Activated T-helper 1 cell treated with anti-CD3 and anti-CD28 coated beads, Interleukin-12 subunit alpha, Interleukin-12 subunit beta, Interleukin-2, Interleukin-4 antibody, amounts not matched to agents 30 ng/mL and 10 ng/mL and 1 ng/mL, durations not matched to agents 14 hours and 24 hours and 36 hours (primary cell): ENCODE measurements at regions of chr1 and their contacts with region 1.

Region 1: DNA sequence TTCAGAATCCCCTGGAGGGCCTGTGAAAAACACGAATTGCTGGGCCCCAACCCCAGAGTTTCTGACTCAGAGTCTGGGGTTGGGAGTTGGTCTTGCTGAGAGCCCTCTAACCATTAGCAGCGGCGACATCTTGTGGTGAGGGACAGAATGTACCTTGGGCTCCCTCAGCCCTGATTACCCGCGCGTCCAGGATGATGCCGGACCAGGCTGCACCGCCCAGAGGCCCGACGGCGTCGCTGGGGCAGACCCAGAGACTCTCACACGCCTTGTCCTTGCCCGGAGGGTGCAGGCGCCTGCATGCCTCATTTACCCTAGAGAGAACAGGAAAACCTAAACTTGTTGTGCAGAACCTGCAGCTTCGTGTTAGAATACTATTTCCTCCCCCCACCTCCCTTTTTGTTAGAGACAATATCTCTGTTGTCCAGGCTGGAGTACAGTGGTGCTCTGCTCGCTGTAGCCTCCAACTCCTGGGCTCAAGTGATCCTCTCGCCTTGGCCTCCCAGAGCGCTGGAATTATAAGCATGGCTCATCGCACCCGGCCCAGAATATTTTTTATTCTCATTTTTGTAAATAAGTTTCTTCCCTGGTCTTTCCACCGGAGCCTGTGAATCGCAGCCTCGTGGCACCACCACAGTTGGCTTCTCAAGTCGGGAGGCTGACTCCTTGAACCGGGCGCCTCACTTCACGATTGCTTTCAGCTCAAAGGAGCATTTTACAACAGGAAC is 22.2 kb upstream of the RD3 start:
- DNase-seq: peak; percentile 58
- H3K4me3 Mint-ChIP-seq: peak overlapping the region; percentile 66
- H3K27ac Mint-ChIP-seq: peak overlapping the region; percentile 55
- H3K4me1 Mint-ChIP-seq: peaks cover 27% of the 10 kb centered on the region
- H3K27me3 Mint-ChIP-seq: peaks cover 13% of the 10 kb centered on the region

Region 2: GRCh38 chr1:210584439-210585113 is 929.6 kb before region 1 on chr1:
- intact Hi-C with region 1: loop called (anchors 1 kb)
- DNase-seq: peak; percentile 37
- H3K4me3 Mint-ChIP-seq: no peak overlapping the region
- H3K27ac Mint-ChIP-seq: no peak overlapping the region
- H3K4me1 Mint-ChIP-seq: peaks cover 9% of the 10 kb centered on the region
- H3K27me3 Mint-ChIP-seq: no peaks in the 10 kb centered on the region

Region 3: GRCh38 chr1:211382714-211383480 is 131.3 kb before region 1 on chr1:
- intact Hi-C with region 1: loop called (anchors 1 kb)
- DNase-seq: peak; percentile 77
- H3K4me3 Mint-ChIP-seq: peak overlapping the region; percentile 91
- H3K27ac Mint-ChIP-seq: peak overlapping the region; percentile 89
- H3K4me1 Mint-ChIP-seq: peaks cover 51% of the 10 kb centered on the region
- H3K27me3 Mint-ChIP-seq: peaks cover 8% of the 10 kb centered on the region

Region 4: GRCh38 chr1:211476200-211476849 is 37.9 kb before region 1 on chr1:
- intact Hi-C with region 1: loop called (anchors 2 kb)
- DNase-seq: peak; percentile 64
- H3K4me3 Mint-ChIP-seq: no peak overlapping the region
- H3K27ac Mint-ChIP-seq: no peak overlapping the region
- H3K4me1 Mint-ChIP-seq: no peaks in the 10 kb centered on the region
- H3K27me3 Mint-ChIP-seq: peaks cover 27% of the 10 kb centered on the region

Region 5: GRCh38 chr1:211501711-211502400 is 12.3 kb before region 1 on chr1:
- intact Hi-C with region 1: no loop called
- DNase-seq: no peak
- H3K4me3 Mint-ChIP-seq: no peak overlapping the region
- H3K27ac Mint-ChIP-seq: no peak overlapping the region
- H3K4me1 Mint-ChIP-seq: no peaks in the 10 kb centered on the region
- H3K27me3 Mint-ChIP-seq: peaks cover 9% of the 10 kb centered on the region

Region 6: DNA sequence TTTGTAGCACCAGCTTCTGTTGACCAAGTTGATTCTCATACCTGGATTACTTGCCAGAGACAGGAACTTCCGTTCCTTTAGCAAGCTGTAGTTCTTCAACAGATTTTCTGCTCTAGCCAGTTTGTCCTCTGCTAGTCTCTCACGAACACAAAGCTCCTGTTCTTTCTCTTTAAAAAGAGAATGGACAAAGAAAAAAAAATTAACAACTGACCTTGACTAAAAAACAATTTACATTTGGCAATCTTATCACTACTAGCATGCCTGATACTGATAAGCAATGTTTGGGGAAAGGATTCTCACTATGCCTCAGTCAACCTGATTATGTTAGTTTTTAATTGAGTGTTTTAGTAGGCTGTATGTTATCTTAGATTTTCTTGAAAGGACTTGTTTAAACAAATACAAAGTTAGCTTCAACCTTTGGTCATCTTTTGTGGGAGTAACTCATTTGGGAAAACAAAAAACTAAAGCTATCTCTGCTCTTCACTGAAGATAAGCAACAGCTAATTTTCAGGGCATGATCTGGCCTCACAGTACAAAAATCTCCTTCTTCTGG is 152.9 kb after region 1 on chr1:
- intact Hi-C with region 1: no loop called
- DNase-seq: no peak
- H3K4me3 Mint-ChIP-seq: no peak overlapping the region
- H3K27ac Mint-ChIP-seq: no peak overlapping the region
- H3K4me1 Mint-ChIP-seq: peaks cover 16% of the 10 kb centered on the region
- H3K27me3 Mint-ChIP-seq: no peaks in the 10 kb centered on the region